Activated CD4-positive, alpha-beta T cell treated with anti-CD3 and anti-CD28 coated beads, Interleukin-2, amount 10 ng/mL, durations not matched to agents 7 days and 5 days (primary cell): ENCODE measurements at regions of chr11 and their contacts with region 1.

Region 1: DNA sequence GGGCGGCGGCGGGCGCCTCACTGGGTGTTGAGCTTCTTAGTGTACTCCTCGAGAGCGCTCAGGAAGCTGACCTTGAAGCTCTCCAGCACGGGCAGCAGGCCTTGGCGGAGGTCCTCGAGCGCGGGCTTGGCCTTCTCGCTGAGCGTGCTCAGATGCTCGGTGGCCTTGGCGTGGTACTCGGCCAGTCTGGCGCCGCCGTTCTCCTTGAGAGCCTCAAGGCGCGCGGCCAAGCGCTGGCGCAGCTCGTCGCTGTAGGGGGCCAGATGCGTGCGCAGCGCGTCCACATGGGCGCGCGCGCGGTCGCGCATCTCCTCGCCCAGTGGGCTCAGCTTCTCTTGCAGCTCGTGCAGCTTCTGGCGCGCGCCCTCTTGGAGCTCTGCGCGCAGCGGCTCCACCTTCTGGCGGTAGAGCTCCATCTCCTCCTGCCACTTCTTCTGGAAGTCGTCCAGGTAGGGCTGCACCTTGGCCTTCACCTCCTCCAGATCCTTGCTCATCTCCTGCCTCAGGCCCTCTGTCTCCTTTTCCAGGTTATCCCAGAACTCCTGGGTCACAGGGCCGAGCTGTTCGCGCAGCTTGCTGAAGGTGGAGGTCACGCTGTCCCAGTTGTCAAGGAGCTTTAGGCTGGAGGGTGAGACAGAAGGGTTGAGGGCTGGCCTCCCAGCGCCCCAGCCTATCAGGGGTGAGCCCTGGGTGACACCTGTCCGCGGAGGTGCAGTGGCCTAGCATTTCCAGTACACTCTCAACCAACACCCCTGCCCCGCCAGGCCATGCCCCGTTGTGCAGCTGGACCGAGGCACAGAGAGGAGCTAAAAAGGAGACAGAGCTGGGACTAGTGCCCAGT is 1.4 kb downstream of the APOA1 start:
- DNase-seq: peak; percentile 83
- H3K4me3 Mint-ChIP-seq: peak overlapping the region; percentile 66
- H3K27ac Mint-ChIP-seq: peak overlapping the region; percentile 80
- H3K4me1 Mint-ChIP-seq: peaks cover 16% of the 10 kb centered on the region
- H3K27me3 Mint-ChIP-seq: no peaks in the 10 kb centered on the region

Region 2: GRCh38 chr11:116821050-116821918 is 14.7 kb before region 1 on chr11:
- CTCF ChIA-PET with region 1: interaction called, 14 read pairs
- POLR2A ChIA-PET with region 1: no interaction called
- DNase-seq: no peak
- H3K4me3 Mint-ChIP-seq: no peak overlapping the region
- H3K27ac Mint-ChIP-seq: no peak overlapping the region
- H3K4me1 Mint-ChIP-seq: no peaks in the 10 kb centered on the region
- H3K27me3 Mint-ChIP-seq: no peaks in the 10 kb centered on the region

Region 3: GRCh38 chr11:116853461-116854073 is 17.6 kb after region 1 on chr11:
- CTCF ChIA-PET with region 1: interaction called, 25 read pairs
- POLR2A ChIA-PET with region 1: no interaction called
- DNase-seq: peak; percentile 82
- H3K4me3 Mint-ChIP-seq: peak overlapping the region; percentile 29
- H3K27ac Mint-ChIP-seq: peak overlapping the region; percentile 95
- H3K4me1 Mint-ChIP-seq: peaks cover 67% of the 10 kb centered on the region
- H3K27me3 Mint-ChIP-seq: no peaks in the 10 kb centered on the region